ENCODE measurements at regions of chr6 and their contacts with region 1.

Region 1: GRCh38 chr6:32933636-32934085 is 7.2 kb downstream of the HLA-DMB start:
- DNase-seq: peak; percentile 67 to 73 (median 70)
- H3K4me3 ChIP-seq: no peak overlapping the region
- H3K4me3 Mint-ChIP-seq: no peak overlapping the region
- H3K27ac ChIP-seq: no peak overlapping the region
- H3K27ac Mint-ChIP-seq: peak overlapping the region in 2 of 7 donors; percentile 4 to 26
- H3K4me1 ChIP-seq: peaks cover 5% of the 10 kb centered on the region
- H3K4me1 Mint-ChIP-seq: peaks cover 0 to 7% (median 5%) of the 10 kb centered on the region in 4 donors
- H3K27me3 ChIP-seq: no peaks in the 10 kb centered on the region
- H3K27me3 Mint-ChIP-seq: no peaks in the 10 kb centered on the region

Region 2: DNA sequence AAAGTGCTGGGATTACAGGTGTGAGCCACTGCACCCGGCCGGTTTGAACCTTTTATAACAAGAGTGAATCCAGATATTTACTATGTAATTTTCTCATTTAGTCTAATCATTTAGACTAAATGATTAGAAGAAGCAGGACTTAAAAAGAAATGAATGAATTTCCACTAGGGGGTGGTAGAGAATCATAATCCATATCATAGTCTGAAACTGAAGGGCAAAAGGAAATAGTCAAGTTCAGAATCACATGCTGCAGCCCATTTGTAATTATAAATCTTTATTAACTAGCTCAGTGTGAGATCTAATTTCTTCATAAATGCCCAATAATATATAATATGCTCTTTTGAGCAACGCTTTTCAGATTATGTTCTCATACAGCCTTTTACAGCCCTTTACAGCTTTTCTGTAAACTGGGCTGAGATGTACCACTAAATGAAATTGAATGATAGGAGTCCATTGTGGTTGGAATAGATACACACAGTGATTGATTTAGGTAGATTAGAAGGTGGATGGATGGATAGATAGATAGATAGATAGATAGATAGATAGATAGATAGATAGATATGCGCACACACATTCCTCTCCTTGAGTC is 47.9 kb before region 1 on chr6:
- CTCF ChIA-PET with region 1: interaction called, 32 read pairs
- POLR2A ChIA-PET with region 1: no interaction called
- intact Hi-C with region 1: loop called (anchors 1 kb)
- DNase-seq: peak in 4 of 5 donors; percentile 64 to 75 (median 69)
- H3K4me3 ChIP-seq: no peak overlapping the region
- H3K4me3 Mint-ChIP-seq: no peak overlapping the region
- H3K27ac ChIP-seq: no peak overlapping the region
- H3K27ac Mint-ChIP-seq: no peak overlapping the region
- H3K4me1 ChIP-seq: no peaks in the 10 kb centered on the region
- H3K4me1 Mint-ChIP-seq: no peaks in the 10 kb centered on the region
- H3K27me3 ChIP-seq: no peaks in the 10 kb centered on the region
- H3K27me3 Mint-ChIP-seq: no peaks in the 10 kb centered on the region

Region 3: GRCh38 chr6:32912951-32913350 is 20.7 kb before region 1 on chr6:
- CTCF ChIA-PET with region 1: interaction called, 14 read pairs
- POLR2A ChIA-PET with region 1: no interaction called
- intact Hi-C with region 1: no loop called
- DNase-seq: no peak
- H3K4me3 ChIP-seq: no peak overlapping the region
- H3K4me3 Mint-ChIP-seq: no peak overlapping the region
- H3K27ac ChIP-seq: no peak overlapping the region
- H3K27ac Mint-ChIP-seq: no peak overlapping the region
- H3K4me1 ChIP-seq: no peaks in the 10 kb centered on the region
- H3K4me1 Mint-ChIP-seq: peaks cover 0 to 5% (median under 1%) of the 10 kb centered on the region in 4 donors
- H3K27me3 ChIP-seq: no peaks in the 10 kb centered on the region
- H3K27me3 Mint-ChIP-seq: peaks cover 6 to 15% of the 10 kb centered on the region in 2 donors

Region 4: DNA sequence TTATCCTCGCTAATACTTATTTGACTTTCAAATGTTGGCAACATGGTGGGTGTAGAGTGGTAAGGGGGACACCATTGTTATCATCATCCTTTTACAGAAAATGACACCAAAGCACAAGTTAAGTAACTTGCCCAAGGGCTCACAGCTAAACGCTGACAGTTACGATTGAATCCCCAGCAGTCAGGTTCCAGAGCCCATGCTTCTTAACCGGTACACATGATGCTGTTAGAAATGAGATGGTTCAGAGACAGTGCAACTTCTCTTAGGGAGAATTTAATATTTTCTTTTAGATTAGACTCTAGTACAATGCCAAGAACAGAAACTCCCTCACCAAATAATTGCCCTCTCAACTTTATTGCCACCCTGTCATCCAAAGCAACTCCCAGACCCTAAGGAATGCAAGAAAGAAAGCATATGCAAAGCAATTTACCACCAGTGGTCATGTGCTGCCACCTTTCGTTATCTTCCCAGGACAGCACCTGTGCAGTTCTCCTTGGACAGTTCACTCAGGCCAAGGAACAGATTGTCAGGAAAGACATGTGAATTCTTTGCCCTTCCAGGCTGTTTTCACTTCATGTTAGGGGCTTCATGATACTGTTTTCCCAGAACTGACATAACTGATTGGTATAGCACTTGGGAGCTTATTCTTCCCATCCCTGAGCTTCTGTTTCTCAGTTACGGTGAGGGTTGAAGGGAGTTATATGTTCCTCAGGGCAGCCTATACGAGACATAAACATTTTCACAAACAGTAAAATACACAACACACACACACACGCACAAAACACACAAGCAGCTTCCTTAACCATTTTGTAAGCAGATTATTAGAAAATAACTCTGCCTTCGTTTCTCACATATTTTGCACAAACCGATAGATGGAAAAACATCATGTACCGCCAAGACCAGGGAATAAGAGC is 14.1 kb after region 1 on chr6:
- CTCF ChIA-PET with region 1: interaction called, 567 read pairs
- POLR2A ChIA-PET with region 1: interaction called, 27 read pairs
- intact Hi-C with region 1: loop called (anchors 1 kb)
- DNase-seq: peak in 4 of 5 donors; percentile 34 to 49 (median 44)
- H3K4me3 ChIP-seq: no peak overlapping the region
- H3K4me3 Mint-ChIP-seq: no peak overlapping the region
- H3K27ac ChIP-seq: no peak overlapping the region
- H3K27ac Mint-ChIP-seq: peak overlapping the region in 5 of 7 donors; percentile 7 to 38 (median 25)
- H3K4me1 ChIP-seq: peaks cover 37% of the 10 kb centered on the region
- H3K4me1 Mint-ChIP-seq: peaks cover 31 to 58% (median 38%) of the 10 kb centered on the region in 4 donors
- H3K27me3 ChIP-seq: no peaks in the 10 kb centered on the region
- H3K27me3 Mint-ChIP-seq: no peaks in the 10 kb centered on the region

Region 5: DNA sequence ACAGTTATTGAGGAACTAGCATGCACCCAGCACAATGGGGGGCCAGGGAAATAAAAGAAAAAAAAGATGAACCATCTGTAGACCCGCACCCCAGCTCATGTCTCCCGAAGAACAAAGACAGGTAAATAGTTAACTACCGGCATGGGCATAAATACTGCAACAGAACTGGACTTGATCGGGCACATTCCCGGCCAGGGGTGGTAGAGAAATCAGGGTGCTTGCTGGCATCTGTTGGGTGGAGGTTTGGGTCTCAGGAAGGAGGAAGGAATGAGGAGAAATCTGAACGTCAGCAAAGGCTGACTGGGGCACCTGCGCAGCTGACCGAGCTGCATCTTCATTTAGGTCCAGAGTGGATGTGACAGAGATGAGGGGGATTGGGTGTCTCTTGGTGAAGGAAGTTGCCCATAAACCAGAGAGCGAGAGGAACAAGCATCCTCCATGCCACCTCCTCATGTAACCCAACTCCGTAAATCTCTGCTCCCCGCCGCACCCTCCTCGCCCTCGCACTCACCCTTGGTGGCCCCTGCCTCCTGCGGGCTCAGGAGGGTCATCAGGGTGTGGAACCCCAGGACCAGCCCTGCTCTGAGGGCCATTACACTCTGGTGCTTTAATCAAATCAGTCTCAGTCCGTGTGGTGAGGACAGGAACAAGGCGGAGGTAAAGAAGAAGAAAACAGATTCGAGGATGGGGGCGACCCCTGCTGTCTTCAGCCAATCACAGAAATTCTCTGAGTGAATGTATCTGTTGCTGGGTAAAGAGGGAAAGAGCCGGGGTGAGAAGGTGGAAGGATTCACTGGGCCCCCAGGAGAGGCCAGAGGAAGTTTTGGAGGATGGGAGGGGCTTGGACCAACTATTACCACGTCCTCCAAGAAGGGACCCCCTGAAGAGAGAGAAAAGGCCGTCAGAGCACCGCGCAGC is 75.5 kb after region 1 on chr6 and contains the start of gene HLA-DOA:
- CTCF ChIA-PET with region 1: no interaction called
- POLR2A ChIA-PET with region 1: no interaction called
- intact Hi-C with region 1: no loop called
- DNase-seq: peak in 3 of 5 donors; percentile 17 to 26 (median 24)
- H3K4me3 ChIP-seq: no peak within 1 kb of the TSS
- H3K4me3 Mint-ChIP-seq: peak within 1 kb of the TSS; percentile 10 to 65 (median 30)
- H3K27ac ChIP-seq: no peak within 1 kb of the TSS
- H3K27ac Mint-ChIP-seq: peak within 1 kb of the TSS in 4 of 7 donors; percentile 11 to 72 (median 37)
- H3K4me1 ChIP-seq: peaks cover 9% of the 10 kb centered on the region
- H3K4me1 Mint-ChIP-seq: peaks cover 5 to 16% (median 8%) of the 10 kb centered on the region in 4 donors
- H3K27me3 ChIP-seq: peaks cover 8% of the 10 kb centered on the region
- H3K27me3 Mint-ChIP-seq: peaks cover 9 to 19% of the 10 kb centered on the region in 2 donors
- total RNA-seq, gene HLA-DOA: 0.69 to 1.4 TPM

Region 6: GRCh38 chr6:33192671-33193602 is 259.3 kb after region 1 on chr6:
- CTCF ChIA-PET with region 1: no interaction called
- POLR2A ChIA-PET with region 1: no interaction called
- intact Hi-C with region 1: no loop called
- DNase-seq: peak in 2 of 5 donors; percentile 11 to 47
- H3K4me3 ChIP-seq: peak overlapping the region in 1 of 2 donors; percentile 32
- H3K4me3 Mint-ChIP-seq: peak overlapping the region; percentile 73 to 88 (median 84)
- H3K27ac ChIP-seq: no peak overlapping the region
- H3K27ac Mint-ChIP-seq: peak overlapping the region in 6 of 7 donors; percentile 29 to 90 (median 66)
- H3K4me1 ChIP-seq: peaks cover 26% of the 10 kb centered on the region
- H3K4me1 Mint-ChIP-seq: peaks cover 9 to 29% (median 17%) of the 10 kb centered on the region in 4 donors
- H3K27me3 ChIP-seq: peaks cover 21% of the 10 kb centered on the region
- H3K27me3 Mint-ChIP-seq: peaks cover 15 to 19% of the 10 kb centered on the region in 2 donors

Region 7: DNA sequence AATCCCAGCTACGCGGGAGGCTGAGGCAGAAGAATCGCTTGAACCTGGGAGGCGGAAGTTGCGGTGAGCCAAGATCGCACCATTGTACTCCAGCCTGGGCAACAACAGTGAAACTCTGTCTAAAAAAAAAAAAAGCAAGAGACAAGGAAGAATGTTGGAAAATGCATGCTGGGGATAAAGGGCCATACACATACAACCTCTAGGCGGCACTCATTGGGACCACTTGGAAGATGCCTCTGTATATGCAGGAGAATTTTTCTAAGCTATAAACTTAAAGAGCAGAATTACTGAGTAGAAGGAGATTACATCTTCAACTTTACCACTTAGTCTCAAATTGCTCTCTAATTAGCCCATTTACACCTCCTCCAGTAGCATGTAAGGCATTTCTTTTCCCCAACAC is 563.5 kb after region 1 on chr6:
- CTCF ChIA-PET with region 1: no interaction called
- POLR2A ChIA-PET with region 1: no interaction called
- intact Hi-C with region 1: no loop called
- DNase-seq: no peak
- H3K4me3 ChIP-seq: no peak overlapping the region
- H3K4me3 Mint-ChIP-seq: no peak overlapping the region
- H3K27ac ChIP-seq: no peak overlapping the region
- H3K27ac Mint-ChIP-seq: no peak overlapping the region
- H3K4me1 ChIP-seq: no peaks in the 10 kb centered on the region
- H3K4me1 Mint-ChIP-seq: no peaks in the 10 kb centered on the region
- H3K27me3 ChIP-seq: no peaks in the 10 kb centered on the region
- H3K27me3 Mint-ChIP-seq: no peaks in the 10 kb centered on the region